Activated naive CD4-positive, alpha-beta T cell treated with anti-CD3 and anti-CD28 coated beads, Interleukin-2, amount 10 ng/mL, durations not matched to agents 7 days and 5 days (primary cell): ENCODE measurements at regions of chr3 and their contacts with region 1.

Region 1: DNA sequence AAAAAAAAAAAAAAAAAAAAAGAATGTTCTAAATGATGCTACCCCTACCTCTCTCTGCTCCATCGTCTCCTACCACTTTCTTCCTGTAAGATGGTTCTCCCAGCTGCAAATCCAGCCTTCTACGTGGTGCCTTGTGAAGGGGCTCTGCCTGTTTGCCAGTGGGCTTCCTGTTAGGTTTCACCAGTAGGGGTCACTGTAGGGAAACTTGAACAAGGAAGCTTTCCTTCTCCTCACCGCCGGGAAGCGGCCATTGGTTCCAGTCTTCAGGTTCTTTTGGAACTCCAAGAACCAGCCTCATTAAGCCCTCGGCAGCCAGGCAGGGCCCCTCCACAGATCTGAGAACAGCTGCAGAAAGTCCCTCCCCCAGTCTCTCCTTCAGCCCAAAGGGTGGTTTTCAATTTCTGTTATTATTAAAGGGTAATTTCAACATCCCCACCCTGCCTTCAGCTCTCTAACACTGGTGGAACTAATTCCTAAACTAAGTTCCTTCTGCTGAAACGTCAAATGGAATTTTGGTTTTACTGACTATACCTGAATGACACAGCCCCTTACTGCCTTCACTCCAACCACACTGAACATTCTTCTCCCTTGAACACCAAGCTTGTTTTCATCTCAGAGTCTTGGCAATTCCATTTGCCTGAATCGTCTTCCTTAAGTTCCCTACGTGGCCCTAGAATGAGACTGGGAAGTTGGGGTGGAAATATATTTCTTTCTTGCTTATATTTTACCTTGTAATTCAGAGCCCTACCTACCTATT is 13.5 kb downstream of the MCCC1 start:
- DNase-seq: peak; percentile 29
- H3K4me3 Mint-ChIP-seq: no peak overlapping the region
- H3K27ac Mint-ChIP-seq: no peak overlapping the region
- H3K4me1 Mint-ChIP-seq: no peaks in the 10 kb centered on the region
- H3K27me3 Mint-ChIP-seq: no peaks in the 10 kb centered on the region

Region 2: DNA sequence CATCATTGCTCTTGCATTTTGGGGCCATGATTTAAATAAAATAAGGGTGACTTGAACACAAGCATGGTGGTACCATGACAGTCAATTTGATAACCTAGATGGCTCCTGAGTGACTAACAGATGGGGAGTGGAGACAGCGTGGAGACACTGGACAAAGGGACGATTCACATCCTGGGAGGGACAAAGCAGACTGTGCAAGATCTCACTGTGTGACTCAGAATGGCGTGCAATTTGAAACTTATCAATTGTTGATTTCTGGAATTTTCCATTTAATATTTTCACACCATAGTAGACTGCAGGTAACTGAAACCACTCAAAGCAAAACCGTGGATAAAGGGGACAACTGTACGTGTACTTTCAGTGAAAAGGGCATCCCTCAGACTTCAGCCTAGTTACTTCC is 12.0 kb before region 1 on chr3:
- CTCF ChIA-PET with region 1: interaction called, 11 read pairs
- DNase-seq: no peak
- H3K4me3 Mint-ChIP-seq: no peak overlapping the region
- H3K27ac Mint-ChIP-seq: no peak overlapping the region
- H3K4me1 Mint-ChIP-seq: peaks cover 3% of the 10 kb centered on the region
- H3K27me3 Mint-ChIP-seq: no peaks in the 10 kb centered on the region

Region 3: DNA sequence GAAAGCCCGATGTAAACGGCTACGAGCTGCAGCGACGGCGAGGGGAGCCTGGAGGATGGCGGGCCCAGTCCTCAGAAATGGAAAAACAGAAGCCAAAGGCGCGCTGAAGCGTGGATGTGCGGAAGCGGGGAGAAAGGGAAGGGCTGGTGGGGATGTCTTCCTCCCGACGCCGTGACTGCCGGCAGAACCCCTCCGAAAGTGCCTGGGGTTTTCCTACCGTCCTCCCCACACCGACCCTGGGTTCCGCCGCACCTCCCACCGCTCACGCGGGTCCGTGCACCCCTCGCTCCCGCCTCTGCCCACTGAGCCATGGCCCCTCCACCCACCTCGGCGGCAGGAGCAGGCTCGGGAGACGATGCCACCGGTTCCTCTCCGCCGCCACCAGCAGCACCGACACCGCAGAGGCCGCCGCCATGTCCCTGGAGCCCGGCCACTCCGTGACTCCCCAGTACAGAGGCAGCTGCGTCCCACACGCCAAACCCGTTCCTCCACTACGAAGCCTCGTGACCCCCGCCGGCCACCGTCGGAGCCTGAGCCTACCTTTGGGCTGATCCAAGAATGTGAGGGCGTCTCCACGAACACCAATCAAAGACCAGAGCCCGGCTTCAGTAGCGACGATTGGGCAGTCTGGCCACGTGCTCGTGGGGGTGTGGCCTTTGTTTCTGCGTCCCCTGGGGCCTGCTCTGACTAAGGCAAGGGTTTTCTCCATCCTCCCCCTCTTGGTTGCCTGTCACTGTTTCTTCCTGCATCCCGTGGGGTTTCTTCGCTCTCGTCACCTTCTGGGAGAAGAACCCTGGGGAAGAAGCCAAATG is 13.4 kb after region 1 on chr3 and contains the start of gene MCCC1:
- CTCF ChIA-PET with region 1: interaction called, 11 read pairs
- DNase-seq: peak; percentile 99
- H3K4me3 Mint-ChIP-seq: peak within 1 kb of the TSS; percentile 88
- H3K27ac Mint-ChIP-seq: peak within 1 kb of the TSS; percentile 92
- H3K4me1 Mint-ChIP-seq: peaks cover 40% of the 10 kb centered on the region
- H3K27me3 Mint-ChIP-seq: no peaks in the 10 kb centered on the region